Right ventricle myocardium inferior (tissue), 1 donor: ENCODE measurements at regions of chr5 and their contacts with region 1.

Region 1: DNA sequence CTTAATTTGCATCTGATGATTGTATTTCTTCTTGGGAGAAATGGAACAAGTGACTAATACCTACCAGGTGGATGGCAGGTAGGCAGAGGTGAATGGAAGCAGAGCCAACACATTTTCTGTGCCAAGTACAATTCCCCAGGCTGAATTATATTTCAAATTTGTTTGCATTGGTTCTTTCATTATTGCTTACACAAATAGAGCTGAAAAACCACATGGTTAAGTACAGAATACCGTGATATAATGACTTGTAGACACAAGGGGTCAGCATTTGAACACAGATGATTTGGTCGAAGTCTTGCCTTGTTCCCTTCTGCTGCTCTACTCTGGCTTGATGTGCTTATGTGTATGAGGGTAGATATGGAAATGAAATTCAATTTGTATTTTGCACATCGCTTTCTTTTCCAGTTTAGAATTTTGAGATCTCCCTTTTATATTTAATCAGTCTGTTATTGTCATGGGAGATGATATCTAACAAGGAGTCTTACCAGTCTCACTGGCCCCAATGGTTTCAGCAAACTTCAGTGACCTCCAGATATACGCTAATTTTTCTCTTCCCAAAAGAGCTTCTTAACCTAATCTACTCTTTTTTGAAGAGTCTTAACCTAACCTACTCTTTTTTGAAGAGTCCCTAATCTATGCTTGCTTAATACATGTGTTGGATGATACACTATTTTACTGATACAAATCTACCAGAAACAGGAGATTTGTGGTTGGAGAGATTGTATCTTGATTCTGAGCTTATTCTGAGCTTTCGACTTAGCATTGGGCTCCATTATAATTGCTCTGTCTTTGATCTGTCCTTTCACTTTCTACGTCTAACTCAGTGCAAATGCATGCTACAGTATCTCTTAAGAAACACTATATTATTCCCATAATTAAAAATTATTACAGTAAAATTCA is 88.1 kb downstream of the PCSK1 start:
- DNase-seq: no peak
- ATAC-seq: peak; percentile 87

Region 2: GRCh38 chr5:96601811-96602244 is 256.9 kb after region 1 on chr5:
- intact Hi-C with region 1: loop called (anchors 2 kb)
- DNase-seq: no peak
- ATAC-seq: peak; percentile 77

Region 3: GRCh38 chr5:96743065-96743768 is 398.3 kb after region 1 on chr5:
- intact Hi-C with region 1: loop called (anchors 10 kb)
- DNase-seq: no peak
- ATAC-seq: no peak